ENCODE measurements at regions of chr17 and their contacts with region 1.

Region 1: GRCh38 chr17:30336369-30337171 is 2.7 kb upstream of the TMIGD1 start:
- DNase-seq: peak; percentile 30
- CTCF ChIP-seq: peak; percentile 51

Region 2: GRCh38 chr17:30104575-30105339 is 231.8 kb before region 1 on chr17:
- in situ Hi-C with region 1: loop called (anchors 5 kb)
- DNase-seq: peak; percentile 66
- CTCF ChIP-seq: peak; percentile 89

Region 3: DNA sequence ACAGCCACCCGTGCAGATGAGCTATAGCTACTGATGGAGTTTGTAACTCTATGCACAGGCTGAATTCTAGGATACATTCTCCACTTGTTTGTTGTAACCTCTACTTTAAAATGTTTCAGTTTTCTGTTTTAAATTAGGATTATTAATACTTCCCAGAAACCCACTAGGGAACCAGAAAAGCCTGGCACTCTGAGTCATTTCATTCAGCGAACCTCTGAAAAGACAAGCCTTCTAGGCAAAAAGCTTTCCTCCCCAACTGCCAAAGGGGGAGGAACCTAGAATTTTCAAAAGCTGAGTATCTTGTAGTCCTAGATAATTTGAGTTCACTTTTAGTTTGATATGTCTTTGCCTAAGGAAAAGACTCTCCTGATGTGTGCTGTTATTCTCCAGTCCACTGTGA is 183.9 kb after region 1 on chr17:
- in situ Hi-C with region 1: no loop called
- DNase-seq: no peak
- CTCF ChIP-seq: no peak

Region 4: GRCh38 chr17:30565073-30565935 is 228.7 kb after region 1 on chr17:
- in situ Hi-C with region 1: no loop called
- DNase-seq: no peak
- CTCF ChIP-seq: no peak

Region 5: GRCh38 chr17:30716461-30717300 is 380.1 kb after region 1 on chr17:
- in situ Hi-C with region 1: loop called (anchors 25 kb)
- DNase-seq: no peak
- CTCF ChIP-seq: peak; percentile 42